ENCODE measurements at regions of chr2 and their contacts with region 1.

Region 1: GRCh38 chr2:68282811-68283418 is 30.6 kb upstream of the PPP3R1 start:
- DNase-seq: peak; percentile 30
- ATAC-seq: peak; percentile 64
- H3K4me3 Mint-ChIP-seq: no peak overlapping the region
- H3K27ac Mint-ChIP-seq: no peak overlapping the region
- H3K4me1 Mint-ChIP-seq: peaks cover 5% of the 10 kb centered on the region
- H3K27me3 Mint-ChIP-seq: peaks cover 7% of the 10 kb centered on the region

Region 2: DNA sequence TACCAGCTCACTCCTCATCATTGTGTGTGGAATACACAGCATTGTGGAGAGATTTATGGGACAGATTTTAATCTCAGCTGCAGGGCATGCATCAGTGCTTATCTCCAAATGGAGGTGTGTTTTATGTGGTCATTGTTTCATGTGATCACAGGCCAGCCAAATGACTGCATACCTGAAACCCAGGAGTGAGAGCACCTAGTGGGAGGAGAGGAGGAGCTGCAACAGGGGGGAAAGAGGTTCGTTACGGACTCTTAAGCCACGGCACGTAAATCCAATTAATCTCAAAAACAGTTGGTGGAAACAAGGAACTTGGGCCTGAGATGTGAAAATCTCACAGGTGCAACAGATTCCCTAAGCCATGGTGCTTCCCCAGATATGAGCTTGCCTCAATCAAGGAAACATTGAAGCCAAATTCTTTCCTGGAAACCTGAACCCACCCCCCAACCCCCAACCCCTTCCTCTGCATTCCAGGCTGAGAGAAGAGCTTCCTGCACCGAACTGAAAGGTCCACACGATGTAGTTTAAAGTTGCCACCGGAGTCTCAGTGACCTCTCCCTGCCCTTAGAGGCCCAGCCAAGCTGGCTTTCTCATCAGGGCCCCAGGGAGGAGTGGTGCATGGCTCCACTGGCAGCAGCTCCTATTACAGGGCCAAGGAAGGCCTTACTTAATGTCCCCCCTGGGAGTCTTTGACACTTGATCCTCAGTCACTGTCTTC is 387.5 kb before region 1 on chr2:
- CTCF ChIA-PET with region 1: no interaction called
- POLR2A ChIA-PET with region 1: no interaction called
- intact Hi-C with region 1: no loop called
- DNase-seq: no peak
- ATAC-seq: no peak
- H3K4me3 Mint-ChIP-seq: no peak overlapping the region
- H3K27ac Mint-ChIP-seq: no peak overlapping the region
- H3K4me1 Mint-ChIP-seq: no peaks in the 10 kb centered on the region
- H3K27me3 Mint-ChIP-seq: peaks cover 7% of the 10 kb centered on the region

Region 3: GRCh38 chr2:68225119-68225632 is 57.7 kb before region 1 on chr2:
- CTCF ChIA-PET with region 1: interaction called, 10 read pairs
- POLR2A ChIA-PET with region 1: no interaction called
- intact Hi-C with region 1: no loop called
- DNase-seq: peak; percentile 33
- ATAC-seq: peak; percentile 61
- H3K4me3 Mint-ChIP-seq: no peak overlapping the region
- H3K27ac Mint-ChIP-seq: no peak overlapping the region
- H3K4me1 Mint-ChIP-seq: peaks cover 84% of the 10 kb centered on the region
- H3K27me3 Mint-ChIP-seq: no peaks in the 10 kb centered on the region

Region 4: GRCh38 chr2:68411397-68412126 is 128.6 kb after region 1 on chr2:
- CTCF ChIA-PET with region 1: no interaction called
- POLR2A ChIA-PET with region 1: no interaction called
- intact Hi-C with region 1: no loop called
- DNase-seq: no peak
- ATAC-seq: no peak
- H3K4me3 Mint-ChIP-seq: no peak overlapping the region
- H3K27ac Mint-ChIP-seq: no peak overlapping the region
- H3K4me1 Mint-ChIP-seq: peaks cover 5% of the 10 kb centered on the region
- H3K27me3 Mint-ChIP-seq: peaks cover 7% of the 10 kb centered on the region

Measured in activated CD4-positive, alpha-beta T cell treated with anti-CD3 and anti-CD28 coated beads for 36 hours (primary cell).